Naive thymus-derived CD4-positive, alpha-beta T cell (primary cell): ENCODE measurements at regions of chr10 and their contacts with region 1.

Region 1: DNA sequence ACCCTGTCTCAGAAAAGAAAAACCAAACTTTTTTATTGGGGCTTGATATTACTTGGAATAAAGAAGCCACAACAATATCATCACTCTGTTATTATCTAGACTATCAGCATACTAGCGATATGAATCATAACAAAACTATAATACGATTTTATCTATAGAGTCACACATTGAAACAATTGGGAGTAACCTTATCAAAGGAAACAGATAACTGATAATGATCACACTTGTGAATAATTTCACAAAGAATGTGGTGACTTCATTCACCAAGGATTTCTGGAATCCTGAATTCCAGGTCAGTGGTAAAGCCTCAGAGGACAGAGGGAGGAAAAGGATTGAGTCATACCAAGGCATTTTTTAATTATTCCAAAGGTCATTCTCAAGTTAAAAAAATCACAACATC is 32.1 kb upstream of the NMT2 start:
- DNase-seq: no peak
- ATAC-seq: no peak
- H3K4me3 ChIP-seq: no peak overlapping the region
- H3K4me3 Mint-ChIP-seq: no peak overlapping the region
- H3K27ac ChIP-seq: no peak overlapping the region
- H3K27ac Mint-ChIP-seq: peak overlapping the region in 4 of 9 donors; percentile 9 to 68 (median 58)
- H3K4me1 ChIP-seq: peaks cover 9 to 19% of the 10 kb centered on the region in 2 donors
- H3K4me1 Mint-ChIP-seq: peaks cover 22 to 69% (median 55%) of the 10 kb centered on the region in 7 donors
- H3K27me3 ChIP-seq: no peaks in the 10 kb centered on the region
- H3K27me3 Mint-ChIP-seq: no peaks in the 10 kb centered on the region

Region 2: DNA sequence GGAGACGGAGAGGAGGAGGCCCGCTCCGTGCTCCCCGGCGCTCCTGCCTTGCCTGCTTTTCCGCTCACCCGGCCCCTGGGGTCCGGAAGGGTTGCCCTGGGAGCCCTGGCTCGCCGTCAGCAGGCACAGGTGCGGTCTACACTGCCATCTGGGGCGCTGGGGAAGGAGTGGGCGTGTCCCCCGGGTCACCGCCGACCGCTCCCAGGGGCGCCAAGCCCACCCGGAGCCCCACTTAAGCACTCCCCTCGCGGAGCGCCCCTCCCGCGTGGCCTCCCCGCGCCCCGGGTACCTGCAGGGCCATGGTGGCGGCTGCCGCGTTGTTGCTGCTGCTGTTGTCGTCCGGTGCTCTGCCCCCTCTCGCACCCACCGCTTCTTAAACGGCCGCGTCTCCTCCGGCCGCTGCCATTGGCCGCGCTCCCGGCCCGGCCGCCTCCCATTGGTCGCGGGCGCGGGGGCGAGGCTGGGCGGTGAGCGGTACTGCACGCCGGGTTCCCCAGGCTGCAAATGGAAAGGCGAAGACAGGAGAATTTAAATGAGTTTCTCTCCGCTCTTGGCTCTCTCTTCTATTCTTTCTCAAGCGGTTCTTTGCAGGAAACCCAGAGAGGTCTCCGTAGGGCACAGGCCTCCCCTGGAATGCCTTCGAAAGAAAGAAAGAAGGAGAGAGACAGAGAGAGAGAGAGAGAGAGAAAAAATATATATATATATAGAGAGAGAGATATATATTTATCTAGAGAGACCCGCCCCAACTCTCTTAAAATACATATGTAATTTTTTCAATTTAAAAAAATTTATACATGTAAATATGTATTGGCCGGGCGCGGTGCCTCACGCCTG is 112.0 kb before region 1 on chr10 and contains the start of gene ACBD7:
- CTCF ChIA-PET with region 1: no interaction called
- POLR2A ChIA-PET with region 1: no interaction called
- intact Hi-C with region 1: no loop called
- DNase-seq: peak; percentile 74 to 87 (median 78)
- ATAC-seq: peak; percentile 98
- H3K4me3 ChIP-seq: peak within 1 kb of the TSS; percentile 71
- H3K4me3 Mint-ChIP-seq: peak within 1 kb of the TSS; percentile 69 to 82 (median 77)
- H3K27ac ChIP-seq: no peak within 1 kb of the TSS
- H3K27ac Mint-ChIP-seq: peak within 1 kb of the TSS in 2 of 9 donors; percentile 29 to 45
- H3K4me1 ChIP-seq: no peaks in the 10 kb centered on the region
- H3K4me1 Mint-ChIP-seq: peaks cover 0 to 6% (median 0%) of the 10 kb centered on the region in 7 donors
- H3K27me3 ChIP-seq: no peaks in the 10 kb centered on the region
- H3K27me3 Mint-ChIP-seq: peaks cover 0 to 19% (median 0%) of the 10 kb centered on the region in 5 donors
- total RNA-seq, gene ACBD7: 0.27 to 1.5 (median 0.60) TPM in 4 of 5 experiments, not detected in the other

Region 3: GRCh38 chr10:15182540-15183207 is 18.0 kb before region 1 on chr10:
- CTCF ChIA-PET with region 1: interaction called, 3 read pairs
- POLR2A ChIA-PET with region 1: interaction called, 20 read pairs
- intact Hi-C with region 1: loop called in 1 of 2 experiments (anchors 1 kb)
- DNase-seq: no peak
- ATAC-seq: no peak
- H3K4me3 ChIP-seq: no peak overlapping the region
- H3K4me3 Mint-ChIP-seq: no peak overlapping the region
- H3K27ac ChIP-seq: no peak overlapping the region
- H3K27ac Mint-ChIP-seq: peak overlapping the region in 5 of 9 donors; percentile 53 to 76 (median 62)
- H3K4me1 ChIP-seq: peaks cover 10 to 24% of the 10 kb centered on the region in 2 donors
- H3K4me1 Mint-ChIP-seq: peaks cover 20 to 53% (median 44%) of the 10 kb centered on the region in 7 donors
- H3K27me3 ChIP-seq: no peaks in the 10 kb centered on the region
- H3K27me3 Mint-ChIP-seq: peaks cover 0 to 4% (median 0%) of the 10 kb centered on the region in 5 donors

Region 4: DNA sequence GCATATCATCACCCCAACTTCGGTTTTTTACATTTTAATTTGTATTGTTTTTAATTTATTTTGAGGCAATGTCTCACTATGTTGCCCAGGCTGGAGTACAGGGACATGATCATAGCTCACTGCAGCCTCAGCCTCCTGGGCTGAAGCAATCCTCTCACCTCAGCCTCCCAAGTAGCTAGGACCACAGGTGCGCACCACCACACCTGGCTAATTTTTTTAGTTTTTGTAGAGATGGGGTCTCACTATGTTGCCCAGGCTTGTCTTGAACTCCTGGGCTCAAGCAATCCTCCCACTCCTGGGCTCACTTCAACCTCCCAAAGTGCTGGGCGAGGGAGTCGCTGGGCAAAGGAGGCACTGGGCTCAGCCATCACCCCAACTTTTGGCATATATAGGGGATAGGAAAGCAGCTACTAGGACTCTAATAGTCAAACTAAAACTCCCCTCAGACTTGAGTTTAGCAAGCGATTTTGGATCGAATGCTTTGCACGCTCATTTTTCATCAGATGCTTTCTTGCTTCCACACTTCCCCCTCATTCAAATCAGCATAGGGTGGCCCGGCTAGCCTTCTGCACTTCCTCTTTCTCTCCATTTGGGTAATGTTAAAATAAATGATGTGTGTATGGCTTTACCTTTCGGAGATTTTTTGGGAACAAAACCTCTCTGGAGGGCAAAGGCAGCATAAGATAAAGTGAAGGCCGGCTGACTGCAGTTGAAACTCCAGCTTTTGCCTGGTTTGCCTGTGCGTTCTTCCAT is 11.3 kb before region 1 on chr10:
- CTCF ChIA-PET with region 1: interaction called, 3 read pairs
- POLR2A ChIA-PET with region 1: interaction called, 22 read pairs
- intact Hi-C with region 1: loop called in 1 of 2 experiments (anchors 1 kb)
- DNase-seq: no peak
- ATAC-seq: peak; percentile 55
- H3K4me3 ChIP-seq: no peak overlapping the region
- H3K4me3 Mint-ChIP-seq: peak overlapping the region in 9 of 10 donors; percentile 39 to 79 (median 66)
- H3K27ac ChIP-seq: no peak overlapping the region
- H3K27ac Mint-ChIP-seq: peak overlapping the region; percentile 59 to 94 (median 88)
- H3K4me1 ChIP-seq: peaks cover 10 to 48% of the 10 kb centered on the region in 2 donors
- H3K4me1 Mint-ChIP-seq: peaks cover 22 to 73% (median 60%) of the 10 kb centered on the region in 7 donors
- H3K27me3 ChIP-seq: no peaks in the 10 kb centered on the region
- H3K27me3 Mint-ChIP-seq: no peaks in the 10 kb centered on the region

Region 5: GRCh38 chr10:15367296-15368085 is 166.9 kb after region 1 on chr10:
- CTCF ChIA-PET with region 1: no interaction called
- POLR2A ChIA-PET with region 1: no interaction called
- intact Hi-C with region 1: no loop called
- DNase-seq: no peak
- ATAC-seq: no peak
- H3K4me3 ChIP-seq: no peak overlapping the region
- H3K4me3 Mint-ChIP-seq: no peak overlapping the region
- H3K27ac ChIP-seq: no peak overlapping the region
- H3K27ac Mint-ChIP-seq: no peak overlapping the region
- H3K4me1 ChIP-seq: peaks cover 3 to 5% of the 10 kb centered on the region in 2 donors
- H3K4me1 Mint-ChIP-seq: peaks cover 4 to 12% (median 5%) of the 10 kb centered on the region in 7 donors
- H3K27me3 ChIP-seq: peaks cover 0 to 9% of the 10 kb centered on the region in 2 donors
- H3K27me3 Mint-ChIP-seq: peaks cover 7 to 69% (median 12%) of the 10 kb centered on the region in 5 donors